Activated CD4-positive, alpha-beta T cell treated with anti-CD3 and anti-CD28 coated beads for 36 hours (primary cell): ENCODE measurements at regions of chr1 and their contacts with region 1.

Region 1: DNA sequence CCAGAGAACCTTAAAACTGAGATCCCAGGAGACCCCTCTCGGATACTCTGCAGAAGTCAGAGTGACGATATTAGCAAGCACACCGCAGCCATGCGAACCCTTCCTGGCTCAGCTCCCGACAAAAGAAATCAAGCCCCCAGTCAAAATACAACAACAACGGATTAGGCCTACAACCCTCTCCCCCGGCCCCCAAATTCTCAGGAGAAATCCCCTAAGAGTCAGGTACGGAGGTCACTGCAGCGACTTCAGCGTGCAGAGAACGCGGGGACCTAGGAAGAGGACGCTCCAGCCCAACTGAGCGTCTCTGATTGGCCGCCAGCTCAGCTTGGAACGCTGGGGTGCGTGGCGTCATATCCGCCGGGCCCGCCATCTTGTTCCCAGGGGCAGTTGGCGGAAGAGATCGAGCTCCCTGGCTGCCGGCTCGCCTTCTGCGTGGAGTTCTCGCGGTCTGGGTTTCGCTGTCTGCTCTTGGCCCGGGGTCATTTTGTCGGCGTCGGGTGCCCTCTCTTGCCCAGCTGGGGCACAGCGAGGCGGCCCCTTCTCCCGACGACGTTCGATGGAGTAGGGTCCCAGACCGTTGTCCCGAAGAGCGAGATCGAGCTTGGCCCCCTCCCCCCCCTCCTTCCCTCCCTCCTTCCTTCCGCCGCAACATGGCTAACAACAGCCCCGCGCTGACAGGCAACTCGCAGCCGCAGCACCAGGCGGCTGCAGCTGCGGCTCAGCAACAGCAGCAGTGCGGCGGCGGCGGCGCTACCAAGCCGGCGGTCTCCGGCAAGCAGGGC is at the start of gene PRPF38B:
- DNase-seq: peak; percentile 97
- ATAC-seq: peak; percentile 92
- H3K4me3 Mint-ChIP-seq: peak within 1 kb of the TSS; percentile 93
- H3K27ac Mint-ChIP-seq: peak within 1 kb of the TSS; percentile 95
- H3K4me1 Mint-ChIP-seq: peaks cover 38% of the 10 kb centered on the region
- H3K27me3 Mint-ChIP-seq: no peaks in the 10 kb centered on the region
- total RNA-seq, gene PRPF38B: 57.9 to 61.1 TPM

Region 2: GRCh38 chr1:108559215-108560186 is 132.6 kb before region 1 on chr1 and contains the start of gene EEIG2:
- CTCF ChIA-PET with region 1: interaction called, 10 read pairs
- POLR2A ChIA-PET with region 1: no interaction called
- intact Hi-C with region 1: loop called (anchors 1 to 5 kb)
- DNase-seq: peak; percentile 94
- ATAC-seq: peak; percentile 84
- H3K4me3 Mint-ChIP-seq: peak within 1 kb of the TSS; percentile 90
- H3K27ac Mint-ChIP-seq: peak within 1 kb of the TSS; percentile 81
- H3K4me1 Mint-ChIP-seq: peaks cover 41% of the 10 kb centered on the region
- H3K27me3 Mint-ChIP-seq: no peaks in the 10 kb centered on the region
- total RNA-seq, gene EEIG2: 5.0 to 7.6 TPM

Region 3: DNA sequence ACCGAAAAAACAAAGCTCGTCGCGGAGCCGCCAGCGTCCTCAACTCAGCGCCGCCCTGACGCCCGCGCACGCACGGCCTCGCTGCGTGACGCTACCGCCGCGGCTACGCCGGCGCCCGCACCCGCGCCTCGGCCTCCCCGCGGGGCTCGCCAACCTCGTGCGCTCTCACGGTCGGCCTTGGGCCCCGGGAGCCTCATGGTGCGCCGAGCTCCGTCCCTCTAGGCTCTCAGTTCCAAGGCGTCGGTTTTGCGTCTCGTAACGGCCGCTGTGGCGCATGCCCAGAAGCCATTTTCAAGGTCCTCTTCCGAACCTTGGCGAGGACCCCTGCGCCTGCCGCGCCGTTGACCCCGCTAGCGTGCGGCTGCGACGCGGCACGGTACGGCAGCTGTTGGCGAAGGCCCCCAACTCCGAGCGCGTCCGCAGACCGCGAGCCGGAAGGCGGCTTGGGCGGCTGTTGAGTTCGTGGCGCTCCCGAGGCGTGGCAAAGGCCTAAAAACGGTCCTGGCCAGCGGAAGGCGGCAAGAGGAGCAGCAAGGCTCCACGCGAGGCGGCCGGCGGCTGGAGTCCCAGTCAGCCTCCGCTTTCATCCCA is 31.0 kb before region 1 on chr1 and contains the start of gene HENMT1:
- CTCF ChIA-PET with region 1: interaction called, 8 read pairs
- POLR2A ChIA-PET with region 1: interaction called, 40 read pairs
- intact Hi-C with region 1: loop called (anchors 1 kb)
- DNase-seq: peak; percentile 88
- ATAC-seq: peak; percentile 86
- H3K4me3 Mint-ChIP-seq: peak within 1 kb of the TSS; percentile 78
- H3K27ac Mint-ChIP-seq: peak within 1 kb of the TSS; percentile 94
- H3K4me1 Mint-ChIP-seq: peaks cover 31% of the 10 kb centered on the region
- H3K27me3 Mint-ChIP-seq: no peaks in the 10 kb centered on the region
- total RNA-seq, gene HENMT1: 14.6 to 20.6 TPM

Region 4: GRCh38 chr1:108746372-108747205 is 54.5 kb after region 1 on chr1 and contains the start of gene STXBP3:
- CTCF ChIA-PET with region 1: interaction called, 6 read pairs
- POLR2A ChIA-PET with region 1: interaction called, 3 read pairs
- intact Hi-C with region 1: loop called (anchors 1 kb)
- DNase-seq: peak; percentile 100
- ATAC-seq: peak; percentile 94
- H3K4me3 Mint-ChIP-seq: peak within 1 kb of the TSS; percentile 96
- H3K27ac Mint-ChIP-seq: peak within 1 kb of the TSS; percentile 99
- H3K4me1 Mint-ChIP-seq: peaks cover 29% of the 10 kb centered on the region
- H3K27me3 Mint-ChIP-seq: no peaks in the 10 kb centered on the region
- total RNA-seq, gene STXBP3: 38.9 to 39.3 TPM

Region 5: GRCh38 chr1:108963052-108963686 is 271.0 kb after region 1 on chr1 and contains the start of gene CLCC1:
- CTCF ChIA-PET with region 1: interaction called, 3 read pairs
- POLR2A ChIA-PET with region 1: no interaction called
- intact Hi-C with region 1: loop called (anchors 2 to 5 kb)
- DNase-seq: peak; percentile 96
- ATAC-seq: peak; percentile 97
- H3K4me3 Mint-ChIP-seq: peak within 1 kb of the TSS; percentile 81
- H3K27ac Mint-ChIP-seq: peak within 1 kb of the TSS; percentile 91
- H3K4me1 Mint-ChIP-seq: peaks cover 26% of the 10 kb centered on the region
- H3K27me3 Mint-ChIP-seq: no peaks in the 10 kb centered on the region
- total RNA-seq, gene CLCC1: 15.7 to 17.1 TPM

Region 6: GRCh38 chr1:109099938-109100773 is 408.0 kb after region 1 on chr1:
- CTCF ChIA-PET with region 1: no interaction called
- POLR2A ChIA-PET with region 1: no interaction called
- intact Hi-C with region 1: loop called in 1 of 2 experiments (anchors 1 kb)
- DNase-seq: peak; percentile 98
- ATAC-seq: peak; percentile 94
- H3K4me3 Mint-ChIP-seq: peak overlapping the region; percentile 98
- H3K27ac Mint-ChIP-seq: peak overlapping the region; percentile 98
- H3K4me1 Mint-ChIP-seq: peaks cover 6% of the 10 kb centered on the region
- H3K27me3 Mint-ChIP-seq: no peaks in the 10 kb centered on the region

Region 7: DNA sequence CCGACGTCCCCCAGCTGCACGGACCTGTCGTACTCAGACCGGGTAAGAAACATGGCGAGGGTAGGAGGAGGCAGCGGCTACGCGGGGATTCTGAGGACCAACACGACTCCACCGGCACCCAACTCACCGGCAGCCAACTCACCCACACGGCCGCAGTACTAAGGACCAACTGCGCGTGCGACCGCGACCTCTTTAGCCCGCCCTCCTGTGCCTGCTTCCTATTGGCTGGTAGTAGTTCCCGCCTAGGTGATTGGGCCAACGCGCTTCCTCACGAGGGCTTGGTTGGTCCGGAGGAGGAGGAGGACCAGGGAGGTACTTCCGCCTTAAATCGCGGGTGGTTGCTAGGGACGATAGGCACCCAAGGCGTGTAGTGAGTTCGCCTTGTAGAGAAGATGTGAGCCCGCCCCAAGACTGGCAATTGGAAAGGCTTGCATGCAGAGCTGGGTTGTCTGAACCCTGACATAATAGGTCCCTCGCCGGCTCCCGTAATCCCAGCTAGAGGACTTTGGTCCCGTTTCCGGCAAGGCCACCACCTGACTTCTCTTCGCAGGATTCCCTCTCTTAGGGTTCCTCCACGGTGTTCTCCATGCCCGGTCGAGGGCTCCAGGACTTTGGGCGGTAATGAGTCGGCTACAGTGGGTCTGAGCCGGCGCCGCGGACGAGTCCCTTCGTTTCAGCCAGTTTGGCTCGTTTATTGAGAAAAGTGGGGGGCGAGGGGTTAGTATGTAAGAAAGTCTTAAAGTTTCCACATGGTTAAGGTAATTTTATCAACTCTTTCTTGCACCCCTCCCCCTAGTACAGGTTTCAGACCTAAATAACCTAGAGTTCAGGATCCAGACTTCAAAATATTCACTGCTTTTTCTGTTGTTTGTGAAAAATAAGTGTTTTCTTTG is 734.4 kb after region 1 on chr1 and contains the start of gene PSMA5:
- CTCF ChIA-PET with region 1: no interaction called
- POLR2A ChIA-PET with region 1: no interaction called
- intact Hi-C with region 1: loop called in 1 of 2 experiments (anchors 1 kb)
- DNase-seq: peak; percentile 97
- ATAC-seq: peak; percentile 97
- H3K4me3 Mint-ChIP-seq: peak within 1 kb of the TSS; percentile 91
- H3K27ac Mint-ChIP-seq: peak within 1 kb of the TSS; percentile 96
- H3K4me1 Mint-ChIP-seq: peaks cover 34% of the 10 kb centered on the region
- H3K27me3 Mint-ChIP-seq: no peaks in the 10 kb centered on the region
- total RNA-seq, gene PSMA5: 151 to 249 TPM